A673 (cell line): ENCODE measurements at regions of chr4 and their contacts with region 1.

Region 1: GRCh38 chr4:1693129-1693896 is 9.2 kb upstream of the FAM53A start:
- DNase-seq: peak; percentile 86
- H3K4me3 ChIP-seq: no peak overlapping the region
- H3K27ac ChIP-seq: no peak overlapping the region
- H3K4me1 ChIP-seq: no peaks in the 10 kb centered on the region
- H3K27me3 ChIP-seq: no peaks in the 10 kb centered on the region
- CTCF ChIP-seq: peak; percentile 97

Region 2: DNA sequence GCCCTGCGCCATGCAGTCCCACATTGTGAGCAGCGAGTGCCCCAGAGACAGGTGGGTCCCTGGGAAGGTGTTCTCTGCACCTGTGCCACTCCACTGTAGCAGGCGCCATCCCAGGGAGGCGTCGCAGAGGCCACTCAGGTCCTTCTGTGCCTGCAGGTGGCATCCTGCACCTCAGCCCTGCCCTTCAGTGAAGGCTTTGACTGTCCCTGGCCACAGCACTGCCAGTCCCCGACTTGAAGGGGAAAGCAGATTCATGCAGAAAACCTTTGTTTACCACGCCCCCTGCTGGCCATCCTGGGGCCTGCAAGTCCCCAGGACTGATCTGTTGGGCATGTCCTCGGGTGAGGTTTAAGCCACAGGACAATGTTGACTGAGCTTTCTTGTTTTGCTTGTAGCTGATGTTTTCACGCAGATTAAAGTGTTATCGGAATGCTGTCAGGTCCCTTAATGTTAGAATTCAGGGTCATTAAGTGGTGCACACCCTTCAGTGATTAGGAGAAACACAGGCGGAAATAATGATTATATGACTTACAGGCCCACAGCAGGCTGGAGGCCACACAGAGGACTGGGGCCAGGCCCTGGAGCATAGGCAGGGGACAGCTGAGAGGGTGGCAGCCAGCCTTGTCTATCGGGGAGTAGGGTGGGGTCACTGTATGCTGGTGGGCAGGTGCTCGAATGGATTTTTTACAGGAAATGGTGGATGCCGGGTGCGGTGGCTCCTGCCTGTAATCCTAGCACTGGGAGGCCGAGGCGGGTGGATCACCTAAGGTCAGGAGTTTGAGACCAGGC is 33.0 kb after region 1 on chr4:
- CTCF ChIA-PET with region 1: interaction called, 11 read pairs
- POLR2A ChIA-PET with region 1: no interaction called
- intact Hi-C with region 1: loop called (anchors 1 kb)
- DNase-seq: peak; percentile 91
- H3K4me3 ChIP-seq: no peak overlapping the region
- H3K27ac ChIP-seq: peak overlapping the region; percentile 12
- H3K4me1 ChIP-seq: peaks cover 10% of the 10 kb centered on the region
- H3K27me3 ChIP-seq: no peaks in the 10 kb centered on the region
- CTCF ChIP-seq: peak; percentile 98